Aorta (tissue), 5 donors: ENCODE measurements at regions of chr3 and their contacts with region 1.

Region 1: GRCh38 chr3:3552761-3553160 is 246.5 kb upstream of the LRRN1 start:
- DNase-seq: no peak
- ATAC-seq: no peak
- H3K4me3 ChIP-seq: no peak overlapping the region
- H3K27ac ChIP-seq: no peak overlapping the region
- H3K4me1 ChIP-seq: no peaks in the 10 kb centered on the region
- H3K27me3 ChIP-seq: no peaks in the 10 kb centered on the region

Region 2: DNA sequence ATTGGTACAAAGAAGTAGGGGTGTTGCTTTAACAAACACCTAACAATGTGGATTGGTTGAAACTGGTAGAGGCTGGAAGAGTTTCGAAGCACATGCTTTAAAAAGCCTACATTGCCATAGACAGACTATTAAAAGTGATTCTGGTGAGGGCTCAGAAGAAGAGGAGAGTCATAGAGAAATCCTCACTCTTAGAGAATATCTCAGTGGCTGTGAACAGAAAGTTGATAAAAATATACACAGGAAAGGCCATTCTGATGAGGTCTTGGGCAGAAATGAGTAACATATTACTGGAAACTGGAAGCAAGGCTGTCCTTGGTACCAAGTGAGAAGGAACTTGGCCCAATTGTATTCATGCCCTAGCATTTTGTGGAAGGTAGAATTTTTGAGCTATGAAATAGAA is 199.6 kb before region 1 on chr3:
- intact Hi-C with region 1: loop called in 1 of 2 experiments (anchors 10 kb)
- DNase-seq: no peak
- ATAC-seq: no peak
- H3K4me3 ChIP-seq: no peak overlapping the region
- H3K27ac ChIP-seq: peak overlapping the region in 1 of 2 donors; percentile 96
- H3K4me1 ChIP-seq: peaks cover 4 to 8% of the 10 kb centered on the region in 2 donors
- H3K27me3 ChIP-seq: no peaks in the 10 kb centered on the region

Region 3: DNA sequence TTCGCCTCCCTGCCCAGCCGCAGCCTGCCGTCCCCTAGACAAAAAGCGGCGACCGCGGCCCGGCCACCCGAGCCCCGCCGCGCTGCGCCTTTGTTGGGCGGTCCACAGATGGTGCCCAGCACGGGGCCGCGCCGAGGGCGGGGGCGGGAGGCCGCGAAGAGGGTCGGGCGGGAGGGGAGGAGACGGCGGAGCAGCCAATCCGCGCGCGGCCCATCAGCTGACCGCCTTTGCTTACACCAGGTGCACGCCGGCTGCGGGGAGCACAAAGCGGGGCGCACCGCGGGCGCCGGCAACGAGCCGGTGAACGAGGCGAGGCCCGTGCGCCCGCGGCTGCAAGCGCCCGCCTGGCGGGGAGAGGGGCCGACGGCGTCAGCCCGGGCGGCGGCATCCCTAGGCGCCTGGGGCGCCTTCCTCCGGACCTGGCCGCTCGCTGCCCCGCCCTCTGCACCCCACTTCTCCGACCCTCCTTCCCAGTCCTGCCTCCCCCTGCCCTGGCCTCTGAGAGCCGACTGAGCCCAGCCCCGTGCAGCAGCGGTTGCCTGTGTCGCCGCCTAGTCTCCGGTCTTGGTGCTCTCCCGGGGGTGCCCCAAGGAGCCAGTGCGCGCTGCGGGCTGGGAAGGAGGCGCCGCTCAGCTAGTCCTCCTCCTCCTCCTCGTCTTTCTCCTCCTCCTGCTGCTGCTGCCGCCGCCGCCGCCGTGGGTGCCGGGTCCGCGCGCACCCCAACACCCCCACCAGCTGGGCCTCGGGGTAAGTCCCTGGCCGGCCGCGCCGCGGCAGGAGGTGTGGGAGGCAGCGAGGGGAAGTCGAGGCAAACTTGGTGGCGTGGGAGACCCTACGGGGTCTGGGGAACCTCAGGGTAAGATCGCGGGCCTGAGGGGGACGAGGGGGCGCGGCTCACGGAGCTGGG is 246.7 kb after region 1 on chr3 and contains the start of gene LRRN1:
- intact Hi-C with region 1: loop called in 1 of 2 experiments (anchors 10 kb)
- DNase-seq: peak; percentile 67 to 86
- ATAC-seq: peak; percentile 77
- H3K4me3 ChIP-seq: peak within 1 kb of the TSS; percentile 42 to 48
- H3K27ac ChIP-seq: peak within 1 kb of the TSS in 1 of 2 donors; percentile 4
- H3K4me1 ChIP-seq: no peaks in the 10 kb centered on the region
- H3K27me3 ChIP-seq: no peaks in the 10 kb centered on the region
- total RNA-seq, gene LRRN1: 4.8 to 6.6 TPM

Region 4: DNA sequence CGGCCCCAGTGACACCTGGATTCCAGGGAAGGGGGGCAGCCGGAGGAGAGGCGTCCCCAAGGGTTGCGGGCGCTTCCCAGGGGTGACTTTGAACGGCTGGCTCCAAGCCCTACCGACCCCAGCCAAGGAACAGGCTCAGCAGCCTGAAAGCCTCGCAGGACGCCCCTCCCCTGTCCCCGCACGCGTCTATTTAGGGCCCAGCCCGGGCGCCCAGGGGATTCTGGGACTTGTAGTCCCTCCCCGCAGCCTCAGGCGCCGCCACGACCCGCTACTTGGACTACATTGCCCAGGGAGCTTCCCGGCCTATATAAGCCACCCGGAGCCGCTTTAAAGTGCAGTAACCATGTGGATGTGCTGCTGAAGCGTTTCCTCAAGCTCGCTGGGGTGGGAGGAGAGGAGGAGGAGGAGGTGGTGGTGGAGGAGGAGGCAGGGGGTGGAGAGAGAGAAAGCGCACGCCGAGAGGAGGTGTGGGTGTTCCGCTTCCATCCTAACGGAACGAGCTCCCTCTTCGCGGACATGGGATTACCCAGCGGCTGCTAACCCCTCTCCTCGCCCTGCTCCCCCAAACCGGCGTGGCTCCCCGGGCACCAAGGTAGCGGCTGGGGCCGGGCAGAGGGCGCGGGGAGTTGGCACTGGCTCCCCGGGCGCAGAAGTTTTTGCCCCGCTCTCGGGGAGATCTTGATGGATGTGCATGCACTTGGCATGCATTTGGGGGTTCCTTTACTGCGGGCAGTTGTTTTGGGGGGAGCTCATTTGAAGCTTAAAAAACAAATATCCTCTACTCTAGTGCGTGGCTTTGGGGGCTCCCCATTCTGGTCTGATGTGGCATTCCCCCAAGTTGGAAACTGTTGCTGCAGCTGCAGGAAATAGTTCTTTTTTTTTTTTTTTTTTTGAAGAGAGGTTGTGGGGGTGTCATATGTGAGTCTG is 940.5 kb after region 1 on chr3 and contains the start of gene ITPR1:
- intact Hi-C with region 1: no loop called
- DNase-seq: peak; percentile 99 to 100
- ATAC-seq: peak; percentile 98
- H3K4me3 ChIP-seq: peak within 1 kb of the TSS; percentile 86 to 92
- H3K27ac ChIP-seq: peak within 1 kb of the TSS; percentile 1 to 73
- H3K4me1 ChIP-seq: no peaks in the 10 kb centered on the region
- H3K27me3 ChIP-seq: no peaks in the 10 kb centered on the region
- total RNA-seq, gene ITPR1: 227 to 294 TPM